Upper lobe of right lung (tissue), 1 donor: ENCODE measurements at regions of chr1 and their contacts with region 1.

Region 1: DNA sequence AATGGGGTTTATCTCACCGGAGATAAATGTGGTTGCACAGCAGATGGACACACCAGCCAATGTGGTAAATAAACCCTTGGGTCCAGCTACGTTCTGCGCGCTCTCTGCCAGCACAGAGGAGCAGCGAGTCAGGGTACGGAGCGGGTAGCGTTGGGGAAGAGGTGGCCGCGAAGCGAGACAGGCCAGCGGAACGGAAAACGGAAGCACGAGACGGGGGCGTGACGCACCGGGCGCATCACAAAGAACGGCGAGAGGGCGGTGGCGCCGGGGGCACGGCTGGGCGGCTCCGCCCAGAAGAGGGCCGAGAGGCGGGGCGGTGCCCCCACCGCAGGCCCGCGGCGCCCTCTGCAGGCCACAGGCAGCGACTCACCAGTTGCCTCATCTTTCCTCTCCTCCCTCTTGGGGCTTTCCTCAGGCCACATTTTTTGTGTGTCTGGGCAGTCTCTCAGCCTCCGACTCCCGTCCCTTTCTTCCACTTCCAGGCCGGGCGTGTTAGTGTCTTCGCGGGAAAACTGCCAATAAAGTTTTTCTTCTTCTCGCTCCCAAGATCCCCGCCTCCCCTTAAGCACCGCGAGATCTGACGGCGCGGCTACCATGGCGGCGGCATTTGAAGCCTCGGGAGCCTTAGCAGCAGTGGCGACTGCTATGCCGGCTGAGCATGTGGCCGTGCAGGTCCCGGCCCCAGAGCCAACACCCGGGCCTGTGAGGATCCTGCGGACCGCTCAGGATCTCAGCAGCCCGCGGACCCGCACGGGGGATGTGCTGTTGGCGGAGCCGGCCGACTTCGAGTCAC is at the start of gene DDX20:
- DNase-seq: peak; percentile 97
- ATAC-seq: peak; percentile 99
- H3K4me3 ChIP-seq: peak within 1 kb of the TSS; percentile 97
- H3K27ac ChIP-seq: peak within 1 kb of the TSS; percentile 94
- H3K4me1 ChIP-seq: peaks cover 16% of the 10 kb centered on the region
- H3K27me3 ChIP-seq: no peaks in the 10 kb centered on the region
- CTCF ChIP-seq: peak; percentile 86
- total RNA-seq, gene DDX20: 10.9 TPM

Region 2: GRCh38 chr1:111481387-111482221 is 273.9 kb before region 1 on chr1:
- intact Hi-C with region 1: loop called (anchors 10 kb)
- DNase-seq: peak; percentile 90
- ATAC-seq: peak; percentile 97
- H3K4me3 ChIP-seq: no peak overlapping the region
- H3K27ac ChIP-seq: no peak overlapping the region
- H3K4me1 ChIP-seq: peaks cover 13% of the 10 kb centered on the region
- H3K27me3 ChIP-seq: no peaks in the 10 kb centered on the region
- CTCF ChIP-seq: peak; percentile 68

Region 3: DNA sequence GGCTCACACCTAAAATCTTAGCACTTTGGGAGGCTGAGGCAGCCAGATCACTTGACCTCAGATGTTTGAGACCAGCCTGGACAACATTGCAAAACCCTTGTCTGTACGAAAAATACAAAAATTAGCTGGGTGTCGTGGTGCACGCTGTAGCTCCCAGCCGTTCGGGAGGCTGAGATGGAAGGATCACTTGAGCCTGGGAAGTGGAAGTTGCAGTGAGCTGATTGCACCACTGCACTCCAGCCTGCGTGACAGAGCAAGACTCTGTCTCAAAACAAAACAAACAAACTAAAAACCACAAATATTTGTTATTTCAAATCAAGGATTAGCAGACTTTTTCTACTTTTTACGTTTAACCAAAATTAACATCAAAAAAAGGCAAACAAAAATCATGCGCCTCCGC is 47.6 kb before region 1 on chr1:
- intact Hi-C with region 1: no loop called
- DNase-seq: no peak
- ATAC-seq: peak; percentile 78
- H3K4me3 ChIP-seq: no peak overlapping the region
- H3K27ac ChIP-seq: peak overlapping the region; percentile 8
- H3K4me1 ChIP-seq: peaks cover 4% of the 10 kb centered on the region
- H3K27me3 ChIP-seq: no peaks in the 10 kb centered on the region
- CTCF ChIP-seq: no peak

Region 4: DNA sequence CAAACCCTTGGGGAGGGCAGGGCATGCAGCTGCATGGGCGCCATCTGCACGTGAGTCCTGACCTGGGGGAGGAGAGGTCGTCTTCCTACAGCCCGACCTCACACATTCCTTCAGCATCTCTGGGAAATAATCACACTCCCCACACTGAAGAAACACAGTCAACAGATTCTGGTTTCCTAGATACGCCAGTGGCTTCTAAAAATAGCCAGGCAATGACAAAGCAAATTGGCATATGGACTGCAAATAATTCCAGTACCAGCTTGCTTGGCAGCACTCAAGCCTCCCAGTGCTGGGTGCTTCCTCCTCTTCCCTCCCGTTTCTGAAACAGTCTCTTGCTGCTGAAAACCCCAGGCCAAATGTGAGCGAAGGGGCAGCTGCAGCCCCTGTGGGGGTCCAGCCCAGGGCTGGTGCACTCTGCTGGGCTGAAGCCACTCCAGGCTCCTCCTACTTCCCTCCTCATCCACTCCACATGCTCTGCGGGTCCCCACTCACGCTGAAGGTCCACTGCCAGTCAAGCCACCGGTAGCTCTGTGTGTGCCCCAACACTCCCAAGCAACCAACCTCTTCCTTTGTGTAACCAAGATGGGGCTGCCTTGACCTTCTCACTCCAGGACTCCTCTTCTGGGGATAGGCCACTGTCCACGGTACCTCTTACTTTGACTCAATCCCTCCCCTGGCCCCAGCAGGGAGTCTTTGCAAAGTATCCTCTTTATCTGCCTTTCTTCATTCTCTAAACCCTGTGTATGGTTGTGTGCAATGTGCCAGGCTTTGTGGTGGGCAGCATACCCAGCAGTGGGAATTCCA is 164.9 kb after region 1 on chr1:
- intact Hi-C with region 1: no loop called
- DNase-seq: no peak
- ATAC-seq: peak; percentile 60
- H3K4me3 ChIP-seq: no peak overlapping the region
- H3K27ac ChIP-seq: no peak overlapping the region
- H3K4me1 ChIP-seq: peaks cover 2% of the 10 kb centered on the region
- H3K27me3 ChIP-seq: no peaks in the 10 kb centered on the region
- CTCF ChIP-seq: no peak